Cardiac septum (tissue), 1 donor: ENCODE measurements at regions of chr1 and their contacts with region 1.

Region 1: GRCh38 chr1:237029850-237030545 is 12.0 kb upstream of the RYR2 start:
- DNase-seq: no peak

Region 2: GRCh38 chr1:237012788-237013383 is 17.1 kb before region 1 on chr1:
- intact Hi-C with region 1: loop called (anchors 1 kb)
- DNase-seq: no peak

Region 3: DNA sequence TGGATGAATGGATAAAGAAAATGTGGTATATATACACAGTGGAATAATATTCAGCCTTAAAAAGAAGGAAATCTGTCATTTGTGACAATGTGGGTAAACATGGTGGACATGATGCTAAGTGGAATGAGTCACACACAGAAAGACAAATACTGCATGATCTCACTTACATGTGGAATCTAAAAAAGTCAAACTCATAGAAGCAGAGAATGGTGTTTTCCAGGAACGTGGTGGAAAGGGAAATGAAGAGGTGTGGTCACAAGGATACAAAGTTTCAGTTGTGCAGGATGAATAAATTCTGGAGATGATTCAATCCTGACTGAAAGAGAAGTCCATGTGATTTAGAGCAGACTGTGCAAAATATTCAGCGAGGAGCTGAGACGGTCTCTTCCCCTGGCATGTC is 68.5 kb after region 1 on chr1:
- intact Hi-C with region 1: no loop called
- DNase-seq: no peak